Activated T-helper 1 cell treated with anti-CD3 and anti-CD28 coated beads, Interleukin-12 subunit alpha, Interleukin-12 subunit beta, Interleukin-2, Interleukin-4 antibody, amounts not matched to agents 30 ng/mL and 10 ng/mL and 1 ng/mL, durations not matched to agents 14 hours and 24 hours and 36 hours (primary cell): ENCODE measurements at regions of chr17 and their contacts with region 1.

Region 1: GRCh38 chr17:65231662-65232335 is 94.6 kb downstream of the RGS9 start:
- DNase-seq: peak; percentile 42
- H3K4me3 Mint-ChIP-seq: no peak overlapping the region
- H3K27ac Mint-ChIP-seq: no peak overlapping the region
- H3K4me1 Mint-ChIP-seq: peaks cover 34% of the 10 kb centered on the region
- H3K27me3 Mint-ChIP-seq: peaks cover 27% of the 10 kb centered on the region

Region 2: DNA sequence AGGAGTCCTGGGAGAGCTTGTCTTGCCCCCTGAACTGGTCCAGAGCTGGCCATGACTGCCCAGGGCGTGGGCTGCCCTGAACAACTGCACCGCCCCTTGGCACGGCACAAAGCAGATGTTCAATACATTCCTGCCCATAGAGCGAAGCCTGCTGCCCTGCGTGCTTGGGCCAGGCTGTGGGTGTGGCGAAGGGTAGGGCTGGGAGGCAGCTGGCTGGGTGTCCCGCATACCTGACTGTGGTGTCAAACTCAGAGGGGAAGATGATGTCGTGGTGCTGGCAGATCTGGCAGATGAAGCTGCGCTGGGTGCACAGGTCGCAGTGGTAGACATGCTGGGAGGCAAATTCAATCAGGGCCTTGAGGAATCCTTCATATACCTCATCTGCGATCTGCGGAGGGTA is 445.5 kb before region 1 on chr17:
- intact Hi-C with region 1: no loop called
- DNase-seq: no peak
- H3K4me3 Mint-ChIP-seq: no peak overlapping the region
- H3K27ac Mint-ChIP-seq: no peak overlapping the region
- H3K4me1 Mint-ChIP-seq: peaks cover 17% of the 10 kb centered on the region
- H3K27me3 Mint-ChIP-seq: peaks cover 1% of the 10 kb centered on the region

Region 3: GRCh38 chr17:65123757-65124675 is 107.8 kb before region 1 on chr17:
- intact Hi-C with region 1: no loop called
- DNase-seq: no peak
- H3K4me3 Mint-ChIP-seq: peak overlapping the region; percentile 82
- H3K27ac Mint-ChIP-seq: peak overlapping the region; percentile 89
- H3K4me1 Mint-ChIP-seq: peaks cover 32% of the 10 kb centered on the region
- H3K27me3 Mint-ChIP-seq: peaks cover 10% of the 10 kb centered on the region

Region 4: DNA sequence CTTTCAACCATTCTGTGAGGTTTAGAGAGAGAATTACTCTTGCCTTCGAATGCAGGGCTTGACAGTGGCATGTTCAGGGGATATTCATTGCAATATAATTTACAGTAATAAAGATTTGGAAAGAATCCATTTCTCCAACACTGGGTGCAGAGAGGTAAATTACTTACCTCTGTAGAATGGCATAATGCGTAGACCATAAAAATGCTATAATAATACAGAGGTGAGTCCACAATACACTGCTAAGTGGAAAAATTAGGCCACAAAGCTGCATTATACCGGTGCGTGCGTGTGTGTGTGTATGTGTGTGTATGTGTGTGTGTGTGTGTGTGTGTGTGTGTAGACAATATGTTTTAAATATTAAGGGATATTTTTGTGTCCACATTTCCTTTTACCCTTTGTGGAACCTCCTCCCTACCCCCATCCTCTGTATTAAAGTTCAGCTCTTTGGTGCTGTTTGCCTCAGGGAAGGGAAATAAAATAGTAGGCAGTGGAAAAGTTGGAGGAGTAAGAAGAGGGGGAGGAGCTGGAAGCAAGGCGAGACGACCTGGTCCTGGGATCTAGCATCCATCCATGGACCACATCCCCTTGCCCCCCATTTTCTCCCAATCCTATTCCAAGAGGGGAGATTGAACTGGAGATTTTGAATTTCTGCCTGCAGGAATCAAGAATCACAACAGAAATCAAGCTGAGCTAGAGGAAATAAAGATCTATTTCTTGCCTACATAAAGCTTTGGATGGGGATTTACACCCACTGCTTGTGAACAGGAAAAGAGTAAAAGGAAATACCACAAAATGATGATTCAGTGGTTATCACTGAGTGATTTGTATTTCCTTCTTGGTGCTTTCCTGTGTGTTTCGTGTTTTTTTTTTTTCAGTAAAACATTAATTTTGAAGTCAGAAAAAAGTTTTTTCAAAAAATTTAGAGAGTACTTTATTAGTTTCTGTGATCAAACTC is 30.2 kb after region 1 on chr17:
- intact Hi-C with region 1: loop called (anchors 1 kb)
- DNase-seq: no peak
- H3K4me3 Mint-ChIP-seq: no peak overlapping the region
- H3K27ac Mint-ChIP-seq: no peak overlapping the region
- H3K4me1 Mint-ChIP-seq: peaks cover 38% of the 10 kb centered on the region
- H3K27me3 Mint-ChIP-seq: peaks cover 13% of the 10 kb centered on the region

Region 5: DNA sequence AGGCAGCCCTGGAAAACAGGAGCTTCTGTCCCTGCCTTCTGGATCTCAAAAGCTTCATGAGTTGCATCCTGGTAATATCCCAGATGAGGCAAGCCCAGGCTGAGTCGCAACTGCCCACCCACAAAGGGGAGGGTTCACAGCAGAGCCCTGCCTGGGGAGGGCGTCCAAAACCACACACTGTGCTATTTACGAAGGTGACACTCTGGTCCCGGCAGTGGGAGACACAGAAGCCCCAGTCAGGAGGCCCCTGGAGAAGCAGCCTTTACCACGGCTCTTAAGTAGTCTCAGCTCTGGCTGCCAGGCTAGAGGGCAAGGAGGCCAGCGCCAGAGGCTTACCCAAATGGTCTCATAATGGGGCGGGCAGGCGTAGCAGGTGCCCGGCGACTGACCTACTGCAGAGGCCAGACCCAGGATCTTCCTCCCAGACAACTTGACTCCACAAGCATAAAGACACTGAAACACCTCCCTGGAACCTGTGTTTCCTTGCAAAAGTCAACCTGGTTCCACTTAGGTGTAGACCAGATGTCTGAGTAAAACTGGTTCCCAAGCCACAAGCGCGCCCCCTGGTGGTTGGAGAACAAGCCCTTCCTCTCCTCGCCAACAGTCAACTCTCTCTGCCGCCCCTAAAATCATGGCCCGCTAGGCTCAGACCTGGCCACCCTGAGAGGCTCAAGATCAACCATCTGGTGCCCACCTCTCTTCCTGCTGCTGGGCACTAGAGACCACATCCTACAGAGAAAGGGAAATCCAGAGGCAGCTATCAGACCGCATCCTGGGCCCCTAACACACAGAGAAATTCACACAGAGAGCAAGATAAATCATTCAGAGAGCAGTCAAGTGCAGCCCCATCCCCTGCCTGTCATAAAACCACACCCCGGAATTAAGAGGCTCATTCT is 324.5 kb after region 1 on chr17:
- intact Hi-C with region 1: loop called (anchors 1 kb)
- DNase-seq: peak; percentile 76
- H3K4me3 Mint-ChIP-seq: no peak overlapping the region
- H3K27ac Mint-ChIP-seq: no peak overlapping the region
- H3K4me1 Mint-ChIP-seq: peaks cover 29% of the 10 kb centered on the region
- H3K27me3 Mint-ChIP-seq: peaks cover 20% of the 10 kb centered on the region

Region 6: DNA sequence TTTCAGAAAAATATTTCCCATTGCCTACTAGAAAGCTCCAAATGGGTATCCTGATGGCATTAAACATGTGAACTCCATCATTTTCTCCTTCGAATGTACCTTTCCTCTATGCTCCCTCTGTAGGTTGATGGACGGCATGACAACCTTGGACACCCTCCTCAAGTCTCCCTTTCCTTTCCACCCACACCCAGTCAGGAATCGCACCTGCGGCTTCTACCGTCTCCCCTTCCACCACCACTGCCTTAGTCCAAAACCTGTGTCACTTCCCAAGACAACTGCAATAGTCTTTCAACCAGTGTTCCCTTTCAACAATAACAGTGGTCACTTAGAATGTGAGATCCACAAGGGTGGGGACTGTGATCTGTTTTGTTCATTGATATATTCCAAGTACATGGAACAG is 562.8 kb after region 1 on chr17:
- intact Hi-C with region 1: loop called (anchors 2 kb)
- DNase-seq: no peak
- H3K4me3 Mint-ChIP-seq: no peak overlapping the region
- H3K27ac Mint-ChIP-seq: no peak overlapping the region
- H3K4me1 Mint-ChIP-seq: peaks cover 6% of the 10 kb centered on the region
- H3K27me3 Mint-ChIP-seq: no peaks in the 10 kb centered on the region

Region 7: GRCh38 chr17:65988081-65988850 is 756.5 kb after region 1 on chr17:
- intact Hi-C with region 1: loop called (anchors 1 kb)
- DNase-seq: no peak
- H3K4me3 Mint-ChIP-seq: no peak overlapping the region
- H3K27ac Mint-ChIP-seq: no peak overlapping the region
- H3K4me1 Mint-ChIP-seq: no peaks in the 10 kb centered on the region
- H3K27me3 Mint-ChIP-seq: peaks cover 7% of the 10 kb centered on the region